CD8-positive, alpha-beta memory T cell (primary cell): ENCODE measurements at regions of chr18 and their contacts with region 1.

Region 1: GRCh38 chr18:63186520-63187222 is 132.9 kb downstream of the BCL2 start:
- DNase-seq: no peak
- H3K4me3 ChIP-seq: no peak overlapping the region
- H3K4me3 Mint-ChIP-seq: no peak overlapping the region
- H3K27ac ChIP-seq: no peak overlapping the region
- H3K27ac Mint-ChIP-seq: peak overlapping the region in 7 of 8 donors; percentile 7 to 84 (median 29)
- H3K4me1 ChIP-seq: peaks cover 46% of the 10 kb centered on the region
- H3K4me1 Mint-ChIP-seq: peaks cover 49 to 85% (median 80%) of the 10 kb centered on the region in 3 donors
- H3K27me3 ChIP-seq: no peaks in the 10 kb centered on the region
- H3K27me3 Mint-ChIP-seq: no peaks in the 10 kb centered on the region

Region 2: GRCh38 chr18:63025251-63026090 is 161.2 kb before region 1 on chr18:
- CTCF ChIA-PET with region 1: no interaction called
- POLR2A ChIA-PET with region 1: no interaction called
- DNase-seq: no peak
- H3K4me3 ChIP-seq: no peak overlapping the region
- H3K4me3 Mint-ChIP-seq: no peak overlapping the region
- H3K27ac ChIP-seq: no peak overlapping the region
- H3K27ac Mint-ChIP-seq: no peak overlapping the region
- H3K4me1 ChIP-seq: no peaks in the 10 kb centered on the region
- H3K4me1 Mint-ChIP-seq: no peaks in the 10 kb centered on the region
- H3K27me3 ChIP-seq: no peaks in the 10 kb centered on the region
- H3K27me3 Mint-ChIP-seq: peaks cover 1 to 3% of the 10 kb centered on the region in 2 donors

Region 3: GRCh38 chr18:63199743-63200241 is 13.1 kb after region 1 on chr18:
- CTCF ChIA-PET with region 1: interaction called, 6 read pairs
- POLR2A ChIA-PET with region 1: interaction called, 13 read pairs
- DNase-seq: peak in 4 of 5 donors; percentile 10 to 71 (median 60)
- H3K4me3 ChIP-seq: peak overlapping the region; percentile 87
- H3K4me3 Mint-ChIP-seq: no peak overlapping the region
- H3K27ac ChIP-seq: peak overlapping the region; percentile 10
- H3K27ac Mint-ChIP-seq: no peak overlapping the region
- H3K4me1 ChIP-seq: peaks cover 74% of the 10 kb centered on the region
- H3K4me1 Mint-ChIP-seq: peaks cover 32 to 49% (median 34%) of the 10 kb centered on the region in 3 donors
- H3K27me3 ChIP-seq: no peaks in the 10 kb centered on the region
- H3K27me3 Mint-ChIP-seq: no peaks in the 10 kb centered on the region

Region 4: GRCh38 chr18:63249771-63250170 is 63.1 kb after region 1 on chr18:
- CTCF ChIA-PET with region 1: no interaction called
- POLR2A ChIA-PET with region 1: no interaction called
- DNase-seq: peak in 1 of 5 donors; percentile 41
- H3K4me3 ChIP-seq: no peak overlapping the region
- H3K4me3 Mint-ChIP-seq: peak overlapping the region in 5 of 7 donors; percentile 23 to 61 (median 40)
- H3K27ac ChIP-seq: no peak overlapping the region
- H3K27ac Mint-ChIP-seq: peak overlapping the region; percentile 2 to 90 (median 48)
- H3K4me1 ChIP-seq: peaks cover 23% of the 10 kb centered on the region
- H3K4me1 Mint-ChIP-seq: peaks cover 37 to 69% (median 68%) of the 10 kb centered on the region in 3 donors
- H3K27me3 ChIP-seq: no peaks in the 10 kb centered on the region
- H3K27me3 Mint-ChIP-seq: no peaks in the 10 kb centered on the region